WTC11 (cell line): ENCODE measurements at regions of chr11 and their contacts with region 1.

Region 1: DNA sequence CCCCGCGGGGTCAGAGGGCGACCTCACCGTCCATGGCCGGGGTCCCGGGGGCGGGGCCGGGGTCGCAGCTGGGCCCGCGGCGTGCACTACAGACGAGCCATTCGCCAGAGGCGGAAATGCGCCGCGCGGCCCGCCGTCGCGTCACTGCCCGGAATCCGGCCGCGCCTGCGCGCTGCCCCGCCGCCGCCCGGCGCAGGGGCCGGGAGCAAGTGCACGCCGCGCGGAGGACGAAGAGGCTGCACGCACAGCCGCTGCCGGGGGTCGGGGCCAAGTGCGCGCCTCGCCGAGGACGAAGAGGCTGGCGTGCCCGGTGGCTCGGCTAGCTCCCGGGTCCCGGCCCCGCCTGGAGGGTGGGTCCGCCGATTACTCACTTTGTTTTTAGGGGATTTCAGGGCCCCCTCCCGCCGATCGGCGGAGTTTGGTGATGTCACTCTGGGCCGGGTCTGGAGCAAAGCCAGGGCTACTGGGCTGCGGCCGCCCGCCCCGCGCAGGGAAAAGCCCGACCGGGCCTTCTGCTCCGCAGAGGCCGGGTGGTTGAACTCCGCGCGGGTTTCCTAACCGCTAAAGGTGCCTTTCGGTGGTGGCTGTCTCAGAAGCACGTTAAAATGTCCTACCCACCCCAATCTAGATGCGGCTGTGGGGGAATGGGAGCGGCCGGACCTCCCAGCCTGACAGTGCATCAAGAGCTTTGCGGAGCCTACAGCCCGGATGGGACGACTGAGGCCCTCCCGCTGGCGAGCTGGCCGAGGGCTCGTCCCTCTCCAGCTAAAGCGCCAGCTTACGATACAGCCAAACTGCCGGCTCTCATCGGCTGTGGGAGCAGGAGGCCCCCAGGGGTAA is at the start of gene RELA:
- DNase-seq: peak; percentile 93
- ATAC-seq: peak; percentile 87
- H3K4me3 Mint-ChIP-seq: peak within 1 kb of the TSS; percentile 86
- H3K27ac Mint-ChIP-seq: peak within 1 kb of the TSS; percentile 49
- H3K4me1 Mint-ChIP-seq: peaks cover 4% of the 10 kb centered on the region
- H3K27me3 Mint-ChIP-seq: no peaks in the 10 kb centered on the region; the same call in 1 of the 2 replicates
- CTCF ChIP-seq: no peak
- total RNA-seq, gene RELA: 26.3 to 35.1 TPM (median 29.0 TPM) in 3 replicates

Region 2: GRCh38 chr11:65652511-65653231 is 10.3 kb before region 1 on chr11:
- CTCF ChIA-PET with region 1: interaction called, 9 read pairs
- POLR2A ChIA-PET with region 1: interaction called, 16 read pairs
- DNase-seq: peak; percentile 90
- ATAC-seq: peak; percentile 84
- H3K4me3 Mint-ChIP-seq: peak overlapping the region; percentile 80
- H3K27ac Mint-ChIP-seq: peak overlapping the region; percentile 96
- H3K4me1 Mint-ChIP-seq: peaks cover 21% of the 10 kb centered on the region
- H3K27me3 Mint-ChIP-seq: peaks cover 3% of the 10 kb centered on the region; the same call in 1 of the 2 replicates
- CTCF ChIP-seq: no peak